ENCODE measurements at regions of chr3 and their contacts with region 1.

Region 1: GRCh38 chr3:78887547-78888011 is 880.2 kb downstream of the ROBO1 start:
- DNase-seq: peak; percentile 34
- ATAC-seq: peak; percentile 48
- H3K4me3 ChIP-seq: no peak overlapping the region
- H3K27ac ChIP-seq: no peak overlapping the region
- H3K4me1 ChIP-seq: no peaks in the 10 kb centered on the region
- H3K27me3 ChIP-seq: no peaks in the 10 kb centered on the region
- CTCF ChIP-seq: no peak
- EP300 ChIP-seq: no peak
- POLR2A ChIP-seq: no peak
- RAD21 ChIP-seq: no peak

Region 2: GRCh38 chr3:78900426-78900825 is 12.8 kb after region 1 on chr3:
- CTCF ChIA-PET with region 1: interaction called, 3 read pairs
- POLR2A ChIA-PET with region 1: interaction called, 3 read pairs
- RAD21 ChIA-PET with region 1: interaction called, 7 read pairs
- SMC1A ChIA-PET with region 1: interaction called, 16 read pairs
- in situ Hi-C with region 1: no loop called
- intact Hi-C with region 1: no loop called
- DNase-seq: no peak
- ATAC-seq: no peak
- H3K4me3 ChIP-seq: no peak overlapping the region
- H3K27ac ChIP-seq: no peak overlapping the region
- H3K4me1 ChIP-seq: no peaks in the 10 kb centered on the region
- H3K27me3 ChIP-seq: no peaks in the 10 kb centered on the region
- CTCF ChIP-seq: no peak
- EP300 ChIP-seq: no peak
- POLR2A ChIP-seq: no peak
- RAD21 ChIP-seq: no peak

Measured in GM12878 (cell line).